Activated T-helper 1 cell treated with anti-CD3 and anti-CD28 coated beads, Interleukin-12 subunit alpha, Interleukin-12 subunit beta, Interleukin-2, Interleukin-4 antibody, amounts not matched to agents 30 ng/mL and 10 ng/mL and 1 ng/mL, durations not matched to agents 14 hours and 24 hours and 36 hours (primary cell): ENCODE measurements at regions of chr16 and their contacts with region 1.

Region 1: DNA sequence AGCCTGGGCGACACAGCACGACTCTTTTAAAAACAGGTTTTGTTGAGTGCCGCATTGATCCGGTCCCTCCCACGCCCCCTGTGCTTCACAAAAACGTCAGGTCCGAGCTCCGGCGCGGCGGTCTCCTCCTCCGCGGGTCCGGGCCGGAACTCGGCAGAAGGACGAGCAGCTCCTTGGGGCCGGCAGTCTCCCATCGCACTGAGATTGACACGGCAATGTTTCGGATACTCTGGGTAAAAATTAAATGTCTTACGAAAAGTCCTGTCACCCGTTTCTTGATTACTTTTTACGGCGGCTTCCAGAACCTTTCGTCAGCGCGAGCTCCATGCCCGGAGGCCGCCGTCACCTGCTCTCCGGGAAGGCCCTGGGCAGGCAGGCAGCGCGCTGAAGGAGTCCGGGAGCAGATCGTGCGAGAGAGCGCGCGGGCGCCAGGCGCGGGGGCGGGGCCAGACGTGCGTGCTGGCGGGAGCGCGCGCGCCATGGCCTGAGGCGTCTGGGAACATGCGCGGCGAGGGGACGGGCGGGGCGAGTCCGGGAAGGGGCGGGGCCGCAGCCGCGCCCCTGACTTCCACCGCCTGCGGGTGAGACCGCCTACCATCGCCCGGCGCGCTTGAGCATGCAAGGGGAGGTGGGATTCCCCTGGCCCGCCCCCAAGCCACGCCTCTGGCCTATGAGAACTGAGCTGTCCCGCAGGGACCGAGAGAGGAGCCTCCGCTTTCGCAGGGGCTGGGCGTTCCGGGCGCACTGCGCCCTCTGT is 11.7 kb upstream of the SRL start:
- DNase-seq: peak; percentile 99
- H3K4me3 Mint-ChIP-seq: peak overlapping the region; percentile 94
- H3K27ac Mint-ChIP-seq: peak overlapping the region; percentile 98
- H3K4me1 Mint-ChIP-seq: peaks cover 4% of the 10 kb centered on the region
- H3K27me3 Mint-ChIP-seq: peaks cover 2% of the 10 kb centered on the region

Region 2: GRCh38 chr16:3938848-3939624 is 314.5 kb before region 1 on chr16:
- intact Hi-C with region 1: loop called (anchors 2 kb)
- DNase-seq: peak; percentile 41
- H3K4me3 Mint-ChIP-seq: no peak overlapping the region
- H3K27ac Mint-ChIP-seq: no peak overlapping the region
- H3K4me1 Mint-ChIP-seq: no peaks in the 10 kb centered on the region
- H3K27me3 Mint-ChIP-seq: peaks cover 2% of the 10 kb centered on the region

Region 3: GRCh38 chr16:3983081-3983520 is 270.5 kb before region 1 on chr16:
- intact Hi-C with region 1: loop called (anchors 1 kb)
- DNase-seq: peak; percentile 29
- H3K4me3 Mint-ChIP-seq: no peak overlapping the region
- H3K27ac Mint-ChIP-seq: no peak overlapping the region
- H3K4me1 Mint-ChIP-seq: peaks cover 4% of the 10 kb centered on the region
- H3K27me3 Mint-ChIP-seq: no peaks in the 10 kb centered on the region

Region 4: DNA sequence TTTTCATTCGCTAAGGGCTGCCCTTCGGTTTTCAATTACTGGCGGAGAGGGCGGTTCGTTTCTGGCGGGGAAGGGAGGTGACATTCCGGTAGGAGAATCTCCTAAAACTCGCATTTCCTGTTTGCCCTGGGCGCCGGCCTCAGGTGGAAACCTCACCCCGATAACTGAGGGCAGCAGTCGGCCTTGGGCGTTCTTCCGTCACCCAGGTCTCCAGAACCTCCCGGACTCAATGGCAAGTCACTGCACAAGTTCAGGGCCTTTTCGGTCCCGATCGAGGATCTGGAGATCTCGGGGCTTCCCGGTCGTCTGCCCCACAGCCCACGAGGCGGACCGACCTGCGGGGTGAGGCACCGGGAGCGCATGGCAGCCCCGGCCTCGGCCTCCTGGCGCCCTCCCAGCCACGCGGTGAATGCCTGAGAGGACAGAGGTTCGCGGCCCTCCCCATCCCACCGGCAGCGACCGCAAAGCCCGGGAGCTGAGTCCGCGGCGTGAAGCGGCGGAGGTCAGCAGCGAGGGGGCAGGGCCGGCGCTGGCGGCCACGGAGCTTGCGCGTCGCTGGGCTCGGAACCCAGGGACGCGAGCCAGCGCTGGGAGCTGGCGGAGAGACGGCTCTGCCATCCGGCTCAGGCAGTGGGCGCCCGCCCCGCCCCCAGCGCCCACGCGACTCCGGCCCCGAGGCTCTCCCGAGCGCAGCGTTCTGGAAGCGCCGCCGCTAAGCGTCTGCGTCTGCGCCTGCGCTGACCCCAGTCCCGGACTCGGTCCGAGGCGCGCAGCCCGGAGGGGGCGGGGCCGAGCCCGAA is 70.1 kb before region 1 on chr16:
- intact Hi-C with region 1: loop called (anchors 1 kb)
- DNase-seq: peak; percentile 92
- H3K4me3 Mint-ChIP-seq: peak overlapping the region; percentile 80
- H3K27ac Mint-ChIP-seq: peak overlapping the region; percentile 80
- H3K4me1 Mint-ChIP-seq: peaks cover 5% of the 10 kb centered on the region
- H3K27me3 Mint-ChIP-seq: peaks cover 12% of the 10 kb centered on the region

Region 5: DNA sequence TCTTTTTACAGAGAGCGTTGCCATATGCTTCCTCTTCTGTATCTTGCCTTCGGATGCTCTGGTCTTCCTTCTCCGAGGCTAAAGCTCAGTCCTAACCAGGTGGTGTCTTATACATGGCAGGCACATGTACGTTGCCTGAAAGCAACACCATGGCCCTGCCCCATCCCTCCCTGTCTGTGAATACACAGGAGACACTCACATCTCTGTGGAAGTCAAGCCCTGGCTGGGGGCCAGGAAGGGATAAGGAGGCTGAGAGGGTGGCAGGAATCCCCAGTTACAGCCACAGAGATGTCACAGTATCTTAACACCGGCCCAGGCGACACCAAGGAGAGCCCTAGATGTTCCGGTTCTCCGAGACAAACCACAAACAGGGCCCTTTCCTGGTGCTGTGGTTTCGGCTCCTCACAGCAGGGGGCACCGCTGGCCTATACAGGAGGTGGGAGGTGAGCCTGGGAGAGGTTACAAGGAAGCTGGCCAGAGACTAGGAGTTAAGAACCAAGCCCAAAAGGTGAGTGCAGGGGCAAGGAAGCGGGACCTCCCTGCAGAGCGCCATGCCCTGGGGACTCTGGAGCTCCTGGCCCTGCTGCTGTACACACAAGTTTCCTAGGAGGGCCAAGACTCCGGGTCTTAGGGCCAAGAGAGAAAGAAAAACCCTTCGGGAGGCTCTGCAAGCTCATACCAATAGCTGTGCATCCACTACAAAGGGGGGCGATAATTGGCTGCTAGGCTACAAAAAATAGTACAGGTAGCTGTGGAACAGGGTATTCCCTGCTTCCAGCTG is 53.4 kb before region 1 on chr16:
- intact Hi-C with region 1: no loop called
- DNase-seq: no peak
- H3K4me3 Mint-ChIP-seq: no peak overlapping the region
- H3K27ac Mint-ChIP-seq: no peak overlapping the region
- H3K4me1 Mint-ChIP-seq: peaks cover 5% of the 10 kb centered on the region
- H3K27me3 Mint-ChIP-seq: peaks cover 14% of the 10 kb centered on the region

Region 6: DNA sequence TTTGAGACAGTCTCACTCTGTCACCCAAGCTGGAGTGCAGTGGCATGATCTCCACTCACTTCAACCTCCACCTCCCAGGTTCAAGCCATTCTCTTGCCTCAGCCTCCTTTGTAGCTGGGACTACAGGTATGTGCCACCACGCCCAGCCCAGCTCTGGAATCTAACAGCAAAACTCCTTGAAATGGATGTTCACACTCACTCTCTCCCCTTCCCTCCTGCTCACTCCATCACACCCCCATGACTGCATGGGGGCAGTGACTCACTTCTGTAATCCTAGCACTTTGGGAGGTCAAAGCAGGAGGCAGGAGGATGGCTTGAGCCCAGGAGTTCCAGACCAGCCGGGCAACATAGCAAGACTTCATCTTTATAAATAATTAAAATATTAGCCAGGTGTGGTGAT is 30.4 kb after region 1 on chr16:
- intact Hi-C with region 1: no loop called
- DNase-seq: no peak
- H3K4me3 Mint-ChIP-seq: no peak overlapping the region
- H3K27ac Mint-ChIP-seq: no peak overlapping the region
- H3K4me1 Mint-ChIP-seq: peaks cover 15% of the 10 kb centered on the region
- H3K27me3 Mint-ChIP-seq: peaks cover 2% of the 10 kb centered on the region